Activated CD4-positive, alpha-beta T cell treated with anti-CD3 and anti-CD28 coated beads, Interleukin-2, amount 10 ng/mL, durations not matched to agents 24 days and 14 days (primary cell): ENCODE measurements at regions of chr14 and their contacts with region 1.

Region 1: DNA sequence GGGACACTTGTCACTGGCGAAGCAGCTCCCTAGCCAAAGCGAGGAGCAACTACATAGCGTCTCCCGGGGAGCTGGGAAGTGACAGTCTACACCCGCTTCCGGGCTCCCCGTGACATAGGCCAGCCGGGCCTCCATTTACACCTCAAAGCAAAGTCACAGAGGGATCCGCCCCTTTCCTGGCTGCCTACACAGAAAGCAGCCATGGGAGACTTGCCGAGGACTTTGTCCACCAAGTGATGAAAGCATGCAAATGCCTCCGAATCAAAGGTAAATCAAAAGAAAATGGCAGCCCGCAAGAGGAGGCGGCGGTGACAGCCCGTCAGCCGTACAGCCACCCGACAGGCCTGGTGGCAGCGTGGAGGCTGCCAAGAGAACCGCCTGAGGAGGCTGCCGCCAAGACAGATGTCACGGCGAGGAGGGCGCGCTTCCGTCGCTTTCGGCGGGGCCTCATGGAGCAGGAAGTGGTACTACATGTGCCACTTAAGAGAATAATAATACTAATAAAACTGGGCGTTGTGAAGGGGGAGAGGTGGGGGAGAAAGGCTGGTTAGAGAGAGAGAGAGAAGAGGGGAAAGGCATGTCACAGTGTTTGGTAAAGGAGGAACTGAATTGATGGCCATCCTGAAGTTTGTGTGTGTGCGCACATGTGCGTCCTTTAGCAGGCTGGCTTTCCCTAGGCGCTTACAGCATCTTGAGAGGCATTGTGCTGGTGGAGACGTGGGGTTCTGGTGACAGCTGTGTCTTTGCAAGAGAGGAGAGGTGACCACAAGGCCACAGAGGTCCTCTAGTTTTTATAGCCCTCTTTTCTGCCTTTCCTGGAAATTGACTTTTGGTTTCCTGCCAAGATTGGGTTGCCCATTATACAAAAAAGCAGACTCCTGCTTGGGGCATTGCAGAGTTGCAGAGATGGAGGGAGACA is 661.7 kb downstream of the VRK1 start:
- DNase-seq: peak; percentile 94
- H3K4me3 Mint-ChIP-seq: peak overlapping the region; percentile 94
- H3K27ac Mint-ChIP-seq: peak overlapping the region; percentile 99
- H3K4me1 Mint-ChIP-seq: peaks cover 56% of the 10 kb centered on the region
- H3K27me3 Mint-ChIP-seq: no peaks in the 10 kb centered on the region

Region 2: DNA sequence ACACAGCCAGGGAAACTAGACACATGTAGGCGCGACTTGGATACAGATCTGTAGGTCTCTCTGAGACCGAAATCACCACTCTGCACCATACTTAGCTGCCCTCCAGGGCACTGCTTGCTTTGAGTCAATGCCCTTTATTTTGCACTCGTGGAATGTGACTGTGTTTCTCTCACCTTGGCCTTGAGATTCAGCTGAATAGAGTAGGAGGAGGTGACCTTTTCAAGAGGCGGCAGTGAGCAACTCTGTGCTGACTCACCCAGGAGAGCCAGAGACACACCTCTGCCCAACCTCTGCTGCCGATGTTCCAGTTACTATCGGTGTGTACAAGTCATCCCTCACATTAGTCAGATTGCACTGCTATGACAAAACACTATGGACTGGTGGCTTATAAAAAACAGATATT is 78.4 kb before region 1 on chr14:
- intact Hi-C with region 1: loop called (anchors 1 kb)
- DNase-seq: peak; percentile 74
- H3K4me3 Mint-ChIP-seq: peak overlapping the region; percentile 33
- H3K27ac Mint-ChIP-seq: peak overlapping the region; percentile 78
- H3K4me1 Mint-ChIP-seq: peaks cover 43% of the 10 kb centered on the region
- H3K27me3 Mint-ChIP-seq: no peaks in the 10 kb centered on the region

Region 3: GRCh38 chr14:97442363-97442762 is 16.6 kb before region 1 on chr14:
- intact Hi-C with region 1: loop called (anchors 1 kb)
- DNase-seq: peak; percentile 78
- H3K4me3 Mint-ChIP-seq: peak overlapping the region; percentile 40
- H3K27ac Mint-ChIP-seq: peak overlapping the region; percentile 92
- H3K4me1 Mint-ChIP-seq: peaks cover 26% of the 10 kb centered on the region
- H3K27me3 Mint-ChIP-seq: no peaks in the 10 kb centered on the region

Region 4: DNA sequence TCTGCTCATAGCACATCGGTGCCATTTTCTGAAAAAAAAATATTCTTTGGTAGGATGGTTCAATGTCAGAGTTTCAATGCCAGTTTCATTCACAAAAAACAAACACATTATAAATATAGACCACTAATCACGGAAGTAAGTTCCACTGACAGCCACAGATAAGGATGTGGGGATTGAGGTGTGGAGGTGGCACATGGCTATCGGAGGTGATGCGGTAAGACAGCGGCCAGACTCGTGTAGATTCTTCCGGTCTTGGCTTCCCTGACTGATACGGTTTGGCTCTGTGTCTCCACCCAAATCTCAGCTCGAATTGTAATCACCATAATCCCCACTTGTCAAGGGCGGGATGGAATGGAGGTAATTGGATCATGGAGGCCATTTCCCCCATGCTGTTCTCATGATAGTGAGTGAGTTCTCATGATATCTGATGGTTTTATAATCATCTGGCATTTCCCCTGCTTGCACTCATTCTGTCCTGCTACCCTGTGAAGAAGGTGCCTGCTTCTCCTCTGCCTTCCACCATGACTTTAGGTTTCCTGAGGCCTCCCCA is 31.7 kb after region 1 on chr14:
- intact Hi-C with region 1: no loop called
- DNase-seq: no peak
- H3K4me3 Mint-ChIP-seq: no peak overlapping the region
- H3K27ac Mint-ChIP-seq: no peak overlapping the region
- H3K4me1 Mint-ChIP-seq: no peaks in the 10 kb centered on the region
- H3K27me3 Mint-ChIP-seq: no peaks in the 10 kb centered on the region

Region 5: DNA sequence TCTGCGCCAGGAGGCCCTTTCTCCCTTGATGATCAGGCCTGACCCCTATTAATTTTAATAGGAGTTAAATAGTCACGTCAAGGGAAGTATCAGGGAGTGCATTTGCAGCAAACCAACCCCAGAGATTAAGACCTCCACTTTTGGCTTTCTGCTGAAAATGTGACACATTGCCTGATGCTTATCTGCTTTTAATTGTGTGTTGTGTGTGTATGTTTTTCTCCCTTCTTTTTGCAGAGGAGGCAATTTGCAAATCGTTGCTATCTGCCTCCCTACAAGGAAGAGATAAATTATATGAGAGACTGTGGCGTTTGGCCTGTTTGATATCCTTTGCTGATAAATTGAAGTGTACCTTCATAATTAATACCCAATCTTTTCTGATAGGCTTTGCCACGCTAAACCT is 161.1 kb after region 1 on chr14:
- intact Hi-C with region 1: loop called (anchors 5 kb)
- DNase-seq: no peak
- H3K4me3 Mint-ChIP-seq: peak overlapping the region; percentile 71
- H3K27ac Mint-ChIP-seq: peak overlapping the region; percentile 63
- H3K4me1 Mint-ChIP-seq: peaks cover 33% of the 10 kb centered on the region
- H3K27me3 Mint-ChIP-seq: no peaks in the 10 kb centered on the region

Region 6: DNA sequence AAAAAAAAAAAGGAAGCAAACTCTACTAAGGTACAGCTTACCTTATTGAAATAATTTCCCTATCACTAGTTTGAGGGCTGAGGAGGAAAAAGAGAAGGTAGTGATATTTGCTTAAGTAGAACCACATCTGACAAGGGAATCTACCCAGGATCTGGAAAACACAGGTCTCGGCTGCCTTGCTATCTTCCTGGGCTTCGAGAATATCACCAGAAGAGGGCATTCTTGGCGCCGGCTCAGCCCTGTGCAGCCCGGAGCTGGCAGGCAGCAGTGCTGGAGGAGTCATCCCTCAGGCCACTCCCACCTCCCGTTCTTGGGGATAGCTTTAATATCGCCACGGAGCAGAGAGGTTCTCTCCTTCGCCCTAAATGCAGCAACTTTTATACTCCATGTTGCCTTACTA is 519.4 kb after region 1 on chr14:
- intact Hi-C with region 1: loop called (anchors 5 kb)
- DNase-seq: peak; percentile 92
- H3K4me3 Mint-ChIP-seq: peak overlapping the region; percentile 89
- H3K27ac Mint-ChIP-seq: peak overlapping the region; percentile 97
- H3K4me1 Mint-ChIP-seq: peaks cover 49% of the 10 kb centered on the region
- H3K27me3 Mint-ChIP-seq: no peaks in the 10 kb centered on the region

Region 7: GRCh38 chr14:99271951-99272631 is 1813.2 kb after region 1 on chr14 and contains the start of gene BCL11B:
- intact Hi-C with region 1: loop called (anchors 5 kb)
- DNase-seq: peak; percentile 96
- H3K4me3 Mint-ChIP-seq: peak within 1 kb of the TSS; percentile 91
- H3K27ac Mint-ChIP-seq: peak within 1 kb of the TSS; percentile 95
- H3K4me1 Mint-ChIP-seq: peaks cover 42% of the 10 kb centered on the region
- H3K27me3 Mint-ChIP-seq: peaks cover 13% of the 10 kb centered on the region
- total RNA-seq, gene BCL11B: 48.2 and 48.5 TPM in 2 replicates